ENCODE measurements at regions of chr1 and their contacts with region 1.

Region 1: GRCh38 chr1:161389691-161390558 is 22.2 kb upstream of the CFAP126 start:
- DNase-seq: peak; percentile 98 to 99
- ATAC-seq: peak; percentile 95 to 97 (median 96)
- H3K4me3 ChIP-seq: peak overlapping the region; percentile 51 to 81 (median 70)
- H3K27ac ChIP-seq: peak overlapping the region; percentile 68 to 99 (median 92)
- H3K4me1 ChIP-seq: peaks cover 0 to 33% (median 9%) of the 10 kb centered on the region in 9 donors
- H3K27me3 ChIP-seq: no peaks in the 10 kb centered on the region
- CTCF ChIP-seq: no peak

Region 2: GRCh38 chr1:161192476-161193465 is 197.2 kb before region 1 on chr1:
- intact Hi-C with region 1: loop called in 5 of 10 experiments (anchors 5 to 10 kb)
- DNase-seq: peak in 1 of 2 donors; percentile 78
- ATAC-seq: peak; percentile 17 to 71 (median 60)
- H3K4me3 ChIP-seq: peak overlapping the region in 2 of 10 donors; percentile 0 to 67
- H3K27ac ChIP-seq: peak overlapping the region in 5 of 10 donors; percentile 17 to 100 (median 41)
- H3K4me1 ChIP-seq: peaks cover 8 to 71% (median 49%) of the 10 kb centered on the region in 9 donors
- H3K27me3 ChIP-seq: no peaks in the 10 kb centered on the region
- CTCF ChIP-seq: peak; percentile 78 to 92 (median 89)

Measured in heart right ventricle (tissue), 16 donors.